ENCODE measurements at regions of chr12 and their contacts with region 1.

Region 1: GRCh38 chr12:104108755-104109445 is 29.1 kb downstream of the NFYB start:
- DNase-seq: peak; percentile 69 to 75
- ATAC-seq: peak; percentile 43 to 86 (median 74)
- H3K4me3 ChIP-seq: no peak overlapping the region
- H3K27ac ChIP-seq: no peak overlapping the region
- H3K4me1 ChIP-seq: peaks cover 0 to 26% (median 12%) of the 10 kb centered on the region in 9 donors
- H3K27me3 ChIP-seq: no peaks in the 10 kb centered on the region
- CTCF ChIP-seq: peak; percentile 58 to 93 (median 87)

Region 2: DNA sequence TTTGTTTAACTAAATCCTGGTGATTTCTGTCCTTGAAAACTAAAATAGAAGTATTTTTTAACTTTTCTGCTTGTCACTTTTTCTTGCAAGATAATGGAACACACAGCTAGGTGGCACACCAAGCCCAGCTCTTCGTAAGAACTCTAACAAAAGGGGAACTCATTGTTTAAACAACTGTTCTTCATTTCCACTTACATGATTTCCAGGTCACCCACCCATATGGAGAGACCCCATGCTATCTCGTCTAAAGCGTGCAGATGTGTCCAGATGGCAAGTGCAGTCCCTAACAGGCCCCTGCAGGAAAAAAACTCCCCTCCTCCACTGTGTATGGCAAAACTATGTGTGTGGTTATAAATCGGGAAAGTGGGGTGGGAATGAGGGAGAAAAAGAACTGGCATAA is 224.6 kb before region 1 on chr12:
- intact Hi-C with region 1: loop called in 6 of 10 experiments (anchors 5 to 10 kb)
- DNase-seq: no peak
- ATAC-seq: peak in 2 of 8 donors; percentile 37 to 38
- H3K4me3 ChIP-seq: no peak overlapping the region
- H3K27ac ChIP-seq: no peak overlapping the region
- H3K4me1 ChIP-seq: no peaks in the 10 kb centered on the region
- H3K27me3 ChIP-seq: no peaks in the 10 kb centered on the region
- CTCF ChIP-seq: peak in 7 of 9 donors; percentile 27 to 59 (median 46)

Region 3: DNA sequence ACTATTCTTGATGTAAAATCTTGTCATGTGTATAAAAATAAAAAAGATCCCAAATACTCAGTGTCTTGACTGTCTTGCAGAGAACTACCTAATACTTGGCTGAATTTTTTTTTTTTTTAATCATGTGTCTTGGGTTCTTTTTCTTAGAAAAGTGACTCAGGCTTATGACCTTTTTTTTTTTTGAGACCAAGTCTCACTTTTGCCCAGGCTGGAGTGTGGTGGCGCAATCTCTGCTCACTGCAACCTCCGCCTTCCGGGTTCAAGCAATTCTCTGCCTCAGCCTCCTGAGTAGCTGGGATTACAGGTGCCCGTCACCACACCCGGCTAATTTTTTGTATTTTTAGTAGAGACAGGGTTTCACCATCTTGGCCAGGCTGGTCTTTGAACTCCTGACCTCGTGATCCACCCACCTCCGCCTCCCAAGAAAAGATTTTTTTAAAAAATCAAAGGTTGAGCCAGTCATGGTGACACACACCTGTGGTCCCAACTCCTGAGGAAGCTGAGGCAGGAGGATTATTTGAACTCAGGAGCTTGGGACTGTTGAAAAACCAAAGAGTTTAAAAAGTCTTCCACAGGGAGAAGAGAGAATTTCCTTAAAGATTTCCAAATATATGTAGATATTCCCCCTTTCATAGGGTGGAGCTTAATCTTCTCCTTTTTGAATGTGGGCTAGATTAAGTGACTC is 160.9 kb before region 1 on chr12:
- intact Hi-C with region 1: loop called in 3 of 10 experiments (anchors 10 kb)
- DNase-seq: no peak
- ATAC-seq: no peak
- H3K4me3 ChIP-seq: no peak overlapping the region
- H3K27ac ChIP-seq: no peak overlapping the region
- H3K4me1 ChIP-seq: no peaks in the 10 kb centered on the region
- H3K27me3 ChIP-seq: no peaks in the 10 kb centered on the region
- CTCF ChIP-seq: no peak

Region 4: DNA sequence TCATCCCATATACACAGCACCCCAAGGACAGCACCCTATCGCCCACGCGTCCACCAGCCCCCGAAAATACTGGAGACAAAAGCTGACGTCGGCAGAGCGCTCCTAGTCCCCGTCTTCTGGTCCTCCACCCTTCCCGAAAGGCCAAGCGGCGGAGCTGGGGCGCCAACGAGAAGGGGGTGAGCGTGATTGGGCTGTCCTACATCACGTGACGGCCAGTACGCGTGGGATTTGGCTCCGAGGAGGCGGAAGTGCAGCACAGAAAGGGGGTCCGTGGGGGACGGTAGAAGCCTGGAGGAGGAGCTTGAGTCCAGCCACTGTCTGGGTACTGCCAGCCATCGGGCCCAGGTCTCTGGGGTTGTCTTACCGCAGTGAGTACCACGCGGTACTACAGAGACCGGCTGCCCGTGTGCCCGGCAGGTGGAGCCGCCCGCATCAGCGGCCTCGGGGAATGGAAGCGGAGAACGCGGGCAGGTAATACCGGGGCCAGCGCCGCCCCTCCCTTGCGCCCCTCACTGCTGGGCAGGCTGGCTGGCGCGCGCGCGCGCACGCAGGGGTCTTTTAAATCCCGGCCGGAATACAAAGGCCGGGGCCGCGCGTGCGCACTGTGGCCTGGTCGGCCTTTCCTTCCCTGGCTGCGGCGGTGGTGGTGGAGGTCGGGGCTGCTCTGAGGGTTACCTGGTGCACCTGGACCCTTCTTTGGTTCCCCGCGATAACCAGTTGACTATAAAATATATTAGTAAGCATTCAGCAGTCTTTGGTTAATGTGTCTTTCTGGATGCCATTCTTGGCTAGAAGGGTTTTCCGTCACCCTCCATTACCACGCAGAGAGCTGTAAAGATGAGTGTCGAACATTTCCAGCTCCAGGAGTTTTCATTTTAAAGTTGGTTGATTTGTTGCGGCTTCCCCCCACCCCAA is 143.1 kb before region 1 on chr12 and contains the start of gene TDG:
- intact Hi-C with region 1: loop called in 2 of 10 experiments (anchors 5 to 10 kb)
- DNase-seq: peak; percentile 97 to 99
- ATAC-seq: peak; percentile 98 to 99 (median 99)
- H3K4me3 ChIP-seq: peak within 1 kb of the TSS; percentile 60 to 99 (median 90)
- H3K27ac ChIP-seq: peak within 1 kb of the TSS; percentile 82 to 99 (median 97)
- H3K4me1 ChIP-seq: peaks cover 3 to 69% (median 56%) of the 10 kb centered on the region in 9 donors
- H3K27me3 ChIP-seq: no peaks in the 10 kb centered on the region
- CTCF ChIP-seq: peak in 7 of 9 donors; percentile 5 to 49 (median 18)
- total RNA-seq, gene TDG: 8.7 to 17.4 (median 11.7) TPM

Region 5: DNA sequence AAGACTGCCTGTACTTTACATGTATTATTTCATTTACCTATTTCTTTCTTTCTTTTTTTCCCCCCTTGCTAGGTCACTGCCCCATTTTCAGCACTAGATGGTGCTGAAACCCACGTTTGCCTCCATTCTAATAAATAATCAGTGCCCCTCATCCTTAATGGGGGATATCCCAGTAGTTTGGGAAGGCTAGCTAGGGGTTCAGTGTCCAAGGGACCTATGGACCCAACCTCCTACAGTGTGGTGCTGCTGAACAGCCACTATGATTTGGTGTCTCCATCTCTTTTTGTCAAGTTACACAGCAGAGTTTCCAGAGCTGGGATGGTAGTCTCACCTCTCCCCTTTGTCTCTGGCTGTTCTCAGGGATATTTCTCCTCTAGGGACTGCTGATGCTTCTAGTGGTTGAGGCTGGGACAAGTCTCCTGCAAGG is 51.1 kb before region 1 on chr12:
- intact Hi-C with region 1: loop called in 4 of 10 experiments (anchors 5 to 10 kb)
- DNase-seq: no peak
- ATAC-seq: no peak
- H3K4me3 ChIP-seq: no peak overlapping the region
- H3K27ac ChIP-seq: no peak overlapping the region
- H3K4me1 ChIP-seq: peaks cover 0 to 20% (median 8%) of the 10 kb centered on the region in 9 donors
- H3K27me3 ChIP-seq: no peaks in the 10 kb centered on the region
- CTCF ChIP-seq: peak in 8 of 9 donors; percentile 11 to 63 (median 54)